HEK293 (cell line): ENCODE measurements at regions of chr16 and their contacts with region 1.

Region 1: DNA sequence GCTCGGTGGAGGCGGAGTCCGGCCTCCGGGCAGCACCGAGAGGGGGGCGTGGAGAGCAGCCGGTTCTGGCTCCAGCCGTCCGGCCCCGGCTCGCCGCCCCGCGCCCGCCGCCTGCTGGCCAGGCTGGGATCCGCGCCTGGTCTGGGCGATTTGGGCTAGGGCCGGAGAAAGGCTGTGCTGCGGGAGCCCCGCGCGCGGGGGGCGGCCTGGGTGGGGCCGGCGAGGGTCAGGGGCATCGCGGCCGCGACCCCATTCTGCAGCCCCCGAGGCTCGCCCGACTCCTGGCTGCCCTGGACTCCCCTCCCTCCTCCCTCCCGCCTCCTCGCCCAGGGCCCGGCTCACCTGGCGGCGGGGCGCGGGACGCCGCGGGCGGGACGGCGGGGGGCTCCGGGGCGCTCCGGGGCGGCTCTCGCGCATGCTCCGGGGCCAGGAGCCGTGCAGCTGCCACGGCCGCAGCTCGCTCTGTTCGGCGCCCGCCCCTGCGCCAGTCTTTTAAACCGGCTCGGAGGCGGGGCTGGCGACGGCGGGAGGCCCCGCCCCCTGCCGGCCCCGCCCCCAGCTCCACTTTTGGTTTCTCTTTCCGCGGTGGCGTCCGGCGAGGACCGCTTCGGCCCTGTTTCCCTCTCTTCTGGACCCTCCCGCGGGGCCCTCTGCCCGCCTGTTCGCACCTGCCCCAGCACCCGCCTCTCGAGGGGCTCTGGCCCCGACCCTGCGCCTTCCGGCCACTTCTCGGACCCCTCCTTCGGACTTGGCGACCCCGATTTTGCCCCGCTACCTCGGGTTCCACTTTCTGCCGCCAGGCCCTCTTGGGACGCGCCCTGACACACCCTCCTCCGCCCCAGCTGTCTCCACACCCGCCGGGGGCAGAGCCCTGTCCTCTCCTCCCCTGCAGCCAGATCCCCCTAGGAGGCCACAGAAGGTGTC is at the start of gene SOCS1:
- H3K4me3 ChIP-seq: peak within 1 kb of the TSS; percentile 72
- H3K27ac ChIP-seq: peak within 1 kb of the TSS; percentile 70; the same call in 1 of the 2 replicates
- H3K4me1 ChIP-seq: peaks cover 5% of the 10 kb centered on the region; the same call in 1 of the 2 replicates
- CTCF ChIP-seq: peak; percentile 41

Region 2: DNA sequence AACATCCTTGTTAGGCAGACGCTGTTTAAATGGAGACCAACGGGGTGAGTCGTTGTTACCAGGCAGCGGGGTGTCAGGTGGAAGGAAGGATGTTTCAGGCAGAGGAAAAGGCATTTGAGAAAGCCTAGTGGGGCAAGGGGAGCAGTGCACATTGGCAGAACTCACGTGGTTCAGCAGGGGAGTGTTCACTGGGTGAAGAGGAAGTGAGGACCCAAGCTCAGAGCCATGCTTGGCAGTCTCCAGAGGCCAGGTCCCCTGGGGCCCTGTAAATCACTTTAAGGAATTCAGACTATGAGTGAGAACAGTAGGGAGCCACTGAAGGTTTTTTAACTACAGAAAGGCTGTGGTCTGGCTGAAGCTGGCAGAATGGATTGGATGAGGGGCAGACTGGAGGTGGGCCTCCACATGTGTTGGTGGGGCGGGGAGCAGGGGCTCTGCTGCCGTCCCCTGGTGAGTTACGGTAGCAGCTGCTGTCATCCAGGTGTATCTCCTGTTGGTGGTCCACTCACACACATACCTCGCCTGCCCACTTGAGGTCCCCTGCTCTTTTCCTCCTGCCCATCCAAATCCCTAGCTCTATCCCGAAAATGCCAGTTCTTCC is 306.5 kb before region 1 on chr16:
- CTCF ChIA-PET with region 1: interaction called, 5 read pairs
- POLR2A ChIA-PET with region 1: interaction called, 13 read pairs
- H3K4me3 ChIP-seq: no peak overlapping the region
- H3K27ac ChIP-seq: no peak overlapping the region
- H3K4me1 ChIP-seq: peaks cover 23% of the 10 kb centered on the region
- CTCF ChIP-seq: no peak

Region 3: DNA sequence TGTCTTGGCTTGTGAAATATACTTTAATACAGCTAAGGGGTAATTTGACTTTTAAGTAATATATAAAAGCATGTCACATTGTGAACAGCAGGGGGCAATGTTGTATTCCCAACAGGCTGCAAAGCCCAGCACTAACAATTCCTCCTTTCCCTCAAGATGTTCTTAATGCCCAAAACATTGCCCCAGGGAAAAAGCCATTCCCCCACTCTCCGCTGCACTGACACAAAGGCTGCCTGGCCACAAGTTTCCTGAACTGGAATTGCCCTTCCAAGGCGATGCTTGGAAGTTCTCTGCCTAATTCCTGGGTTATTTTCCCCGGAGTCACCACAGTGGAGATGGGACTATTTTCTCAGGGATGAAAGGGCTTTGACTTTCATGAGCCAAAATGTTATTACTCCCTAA is 284.4 kb before region 1 on chr16:
- CTCF ChIA-PET with region 1: interaction called, 58 read pairs
- POLR2A ChIA-PET with region 1: interaction called, 19 read pairs
- H3K4me3 ChIP-seq: no peak overlapping the region
- H3K27ac ChIP-seq: no peak overlapping the region
- H3K4me1 ChIP-seq: peaks cover 2% of the 10 kb centered on the region
- CTCF ChIP-seq: peak; percentile 68

Region 4: DNA sequence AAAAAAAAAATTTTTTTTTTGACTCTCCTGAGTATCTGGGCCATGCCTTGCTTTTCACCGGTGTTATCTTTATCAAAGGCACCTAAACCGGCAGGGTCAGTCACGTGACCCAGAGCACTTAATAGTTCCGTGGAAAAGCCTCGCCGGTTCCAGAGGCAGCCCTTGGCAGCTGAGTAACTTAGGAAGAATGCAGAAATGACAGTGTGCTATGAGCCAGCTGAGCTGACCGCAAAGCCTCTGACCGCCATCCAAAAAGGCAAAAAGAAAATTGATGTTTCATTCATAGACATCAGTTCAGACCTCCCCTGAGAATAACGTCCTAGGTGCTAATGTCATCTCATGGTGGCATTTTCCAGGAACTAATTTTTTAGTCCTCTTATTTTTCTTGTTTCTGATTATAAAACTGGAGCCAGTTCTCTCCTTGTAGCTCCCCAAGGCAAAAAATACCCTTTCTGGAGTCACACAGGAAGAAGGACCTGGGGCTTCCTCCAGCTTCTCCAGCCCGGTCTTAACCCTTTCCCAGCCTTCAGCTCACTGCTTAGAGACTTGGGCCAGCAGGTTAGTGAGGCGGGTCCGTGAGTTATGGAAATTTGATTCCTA is 122.6 kb before region 1 on chr16:
- CTCF ChIA-PET with region 1: interaction called, 7 read pairs
- POLR2A ChIA-PET with region 1: interaction called, 11 read pairs
- H3K4me3 ChIP-seq: no peak overlapping the region
- H3K27ac ChIP-seq: no peak overlapping the region
- H3K4me1 ChIP-seq: peaks cover 9% of the 10 kb centered on the region
- CTCF ChIP-seq: no peak

Region 5: GRCh38 chr16:11171757-11172299 is 84.2 kb before region 1 on chr16:
- CTCF ChIA-PET with region 1: no interaction called
- POLR2A ChIA-PET with region 1: no interaction called
- H3K4me3 ChIP-seq: no peak overlapping the region
- H3K27ac ChIP-seq: no peak overlapping the region
- H3K4me1 ChIP-seq: no peaks in the 10 kb centered on the region
- CTCF ChIP-seq: no peak

Region 6: DNA sequence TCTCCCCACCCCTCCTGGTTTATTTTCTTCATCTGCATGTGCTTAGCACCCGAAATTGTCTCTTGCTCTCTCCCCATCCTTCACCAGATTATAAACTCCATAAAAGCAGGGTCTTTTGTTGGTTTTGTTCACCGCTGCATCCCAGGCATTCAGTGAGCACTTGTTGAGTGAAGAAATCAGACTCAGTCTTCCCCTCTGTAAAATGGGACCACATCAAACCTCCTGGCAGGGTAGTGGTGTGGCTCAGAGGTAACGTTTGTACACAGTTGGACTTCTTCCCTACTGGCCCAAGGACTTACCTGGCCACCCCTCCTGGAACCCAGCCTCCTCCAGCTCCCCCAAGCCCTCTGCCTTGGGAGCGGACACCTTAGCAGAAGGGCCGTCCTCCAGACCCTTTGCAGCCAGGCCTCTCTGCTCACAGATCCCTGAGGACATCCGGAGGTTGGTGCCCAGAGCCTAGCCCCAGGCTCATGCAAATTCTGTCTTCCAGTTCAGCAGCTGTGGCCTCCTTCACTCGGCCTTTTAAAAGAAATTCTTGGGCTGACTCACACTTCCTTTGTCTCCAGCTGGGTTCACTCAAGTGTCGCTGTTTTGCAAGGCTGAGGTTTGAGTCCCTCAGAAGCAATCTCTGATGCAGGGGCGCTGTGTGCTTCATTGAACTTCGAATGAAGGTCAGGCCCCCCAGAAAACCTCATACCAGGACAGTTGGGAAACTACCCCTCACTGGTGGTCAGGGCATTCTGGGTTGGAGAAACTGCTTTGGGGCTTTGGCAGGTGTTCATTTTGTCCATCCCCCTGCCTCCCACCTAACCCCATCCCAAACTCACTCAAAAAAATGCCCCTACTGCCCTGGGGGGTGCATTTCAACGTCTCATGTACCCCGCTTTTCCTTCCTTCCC is 72.4 kb after region 1 on chr16:
- CTCF ChIA-PET with region 1: no interaction called
- POLR2A ChIA-PET with region 1: interaction called, 16 read pairs
- H3K4me3 ChIP-seq: no peak overlapping the region
- H3K27ac ChIP-seq: no peak overlapping the region
- H3K4me1 ChIP-seq: no peaks in the 10 kb centered on the region
- CTCF ChIP-seq: no peak

Region 7: DNA sequence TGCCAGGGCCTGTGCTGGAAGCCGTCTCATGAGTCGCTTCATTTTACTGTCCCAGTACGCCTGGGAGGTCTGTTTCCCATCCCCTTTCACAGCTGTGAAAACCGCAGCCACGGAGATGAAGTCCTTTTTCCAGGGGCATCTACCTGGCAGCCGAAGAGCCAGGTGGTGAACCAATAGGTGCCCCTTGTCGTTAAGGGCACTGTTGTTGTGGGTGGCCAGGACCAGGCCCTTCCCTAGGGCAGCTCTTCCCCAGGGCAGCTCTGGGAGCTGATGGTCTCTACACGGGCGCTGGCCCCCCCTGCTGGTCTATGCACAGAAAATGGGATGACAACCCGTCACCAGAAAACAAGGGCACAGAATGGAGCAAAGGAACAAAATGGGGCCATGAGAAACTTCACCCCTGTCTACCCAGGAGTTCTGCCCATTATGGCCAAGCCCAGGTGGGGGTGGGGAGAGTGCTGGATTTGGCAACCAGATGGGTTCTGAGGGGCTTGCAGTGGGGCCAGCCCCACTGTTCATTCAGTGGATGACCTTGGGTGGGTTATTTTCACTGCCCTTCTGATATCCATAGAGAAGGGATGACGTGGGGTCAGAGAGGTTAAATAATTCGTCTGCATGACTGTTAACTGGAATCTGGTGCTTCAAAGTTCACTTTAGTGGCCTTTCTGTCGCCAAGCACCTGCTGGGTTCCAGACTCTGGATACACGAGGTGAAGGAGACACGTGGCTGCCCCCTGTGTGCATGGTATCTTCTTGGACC is 100.8 kb after region 1 on chr16:
- CTCF ChIA-PET with region 1: interaction called, 11 read pairs
- POLR2A ChIA-PET with region 1: interaction called, 15 read pairs
- H3K4me3 ChIP-seq: no peak overlapping the region
- H3K27ac ChIP-seq: no peak overlapping the region
- H3K4me1 ChIP-seq: 0 out of 2 replicates have a peak, but pooled peaks cover 3% of the 10 kb centered on the region
- CTCF ChIP-seq: 0 out of 2 replicates have a peak, but pooled peaks have one; percentile 10

Region 8: GRCh38 chr16:11459722-11460121 is 203.7 kb after region 1 on chr16:
- CTCF ChIA-PET with region 1: no interaction called
- POLR2A ChIA-PET with region 1: no interaction called
- H3K4me3 ChIP-seq: no peak overlapping the region
- H3K27ac ChIP-seq: no peak overlapping the region
- H3K4me1 ChIP-seq: no peaks in the 10 kb centered on the region
- CTCF ChIP-seq: no peak